Aorta (tissue), 5 donors: ENCODE measurements at regions of chr17 and their contacts with region 1.

Region 1: DNA sequence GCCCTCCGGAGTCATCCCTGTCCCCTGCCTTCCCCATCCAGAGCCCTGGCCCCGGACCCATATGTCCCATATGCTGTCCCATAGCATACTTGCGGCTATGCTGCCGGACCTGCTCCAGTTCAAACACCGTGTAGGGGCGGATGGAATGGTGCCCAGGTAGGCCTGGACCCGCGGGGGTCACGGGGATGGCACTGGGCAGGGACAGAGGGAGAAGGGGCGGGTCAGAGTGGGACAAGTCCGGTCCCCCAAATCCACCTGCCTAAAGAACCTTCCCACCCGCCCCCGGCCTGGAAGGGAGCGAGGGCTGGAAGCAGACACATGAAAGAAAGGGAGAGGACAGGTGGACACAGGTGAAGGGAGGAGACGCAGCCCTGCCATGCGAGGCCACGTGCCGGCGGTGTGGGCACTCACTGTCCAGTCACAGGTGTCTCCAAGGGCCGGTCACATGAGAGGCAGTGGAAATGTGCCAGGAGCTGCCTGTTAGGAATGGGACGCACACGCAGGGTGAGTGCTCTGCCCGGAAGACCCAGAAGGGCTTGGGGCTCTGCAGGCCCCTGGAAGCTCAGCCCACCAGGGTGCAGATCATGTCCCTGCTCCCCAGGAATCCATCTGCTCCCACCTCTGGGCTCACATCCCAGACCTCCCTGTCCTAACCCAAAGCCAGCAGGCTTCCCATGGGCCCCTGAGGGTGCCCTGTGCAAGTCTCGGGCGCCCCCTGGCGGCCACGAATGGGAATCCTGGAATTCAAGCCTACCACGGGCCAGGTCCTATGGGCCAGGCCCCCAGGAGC is 14.0 kb downstream of the UBALD2 start:
- DNase-seq: peak; percentile 90 to 96
- ATAC-seq: peak; percentile 87
- H3K4me3 ChIP-seq: no peak overlapping the region
- H3K27ac ChIP-seq: no peak overlapping the region
- H3K4me1 ChIP-seq: no peaks in the 10 kb centered on the region
- H3K27me3 ChIP-seq: no peaks in the 10 kb centered on the region

Region 2: DNA sequence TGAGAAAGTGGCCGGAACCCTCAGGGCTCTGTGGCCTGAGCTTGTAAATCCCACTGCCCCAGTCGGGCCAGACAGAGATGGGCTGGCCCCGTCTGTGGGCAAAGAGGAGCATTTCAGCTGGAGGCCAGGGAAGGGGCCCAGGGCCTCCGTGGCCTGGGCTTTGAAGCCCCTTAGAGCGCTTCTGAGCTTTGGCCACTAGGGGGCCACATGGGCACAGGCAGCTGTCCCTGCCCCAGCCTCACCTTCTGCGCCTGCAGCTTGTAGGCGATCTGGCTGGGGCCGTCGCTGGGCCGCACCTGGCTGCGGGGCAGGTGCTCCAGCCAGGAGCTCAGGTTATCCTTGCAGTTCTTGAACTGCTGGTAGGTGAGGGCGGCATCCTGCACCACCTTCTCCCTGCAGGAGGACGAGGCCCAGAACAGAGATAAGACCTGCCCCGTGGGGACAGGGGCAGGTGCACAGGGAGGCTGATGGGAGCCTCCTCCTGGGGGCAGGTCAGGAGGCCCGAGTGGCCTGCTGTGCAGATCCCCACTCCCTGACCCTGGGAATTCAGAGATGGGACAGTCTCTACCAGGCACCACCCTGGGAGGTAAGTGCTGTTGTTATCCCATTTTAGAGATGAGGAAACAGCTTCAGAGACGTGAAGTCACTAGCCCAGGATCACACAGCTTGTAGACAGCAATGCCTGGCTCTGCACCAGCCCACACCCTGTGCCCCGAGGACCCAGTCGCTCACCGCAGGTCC is 264.8 kb before region 1 on chr17:
- intact Hi-C with region 1: loop called in 1 of 2 experiments (anchors 5 kb)
- DNase-seq: peak; percentile 78 to 88
- ATAC-seq: peak; percentile 75
- H3K4me3 ChIP-seq: no peak overlapping the region
- H3K27ac ChIP-seq: no peak overlapping the region
- H3K4me1 ChIP-seq: no peaks in the 10 kb centered on the region
- H3K27me3 ChIP-seq: no peaks in the 10 kb centered on the region

Region 3: GRCh38 chr17:76191896-76192295 is 87.3 kb before region 1 on chr17:
- intact Hi-C with region 1: loop called in 1 of 2 experiments (anchors 5 kb)
- DNase-seq: no peak
- ATAC-seq: no peak
- H3K4me3 ChIP-seq: no peak overlapping the region
- H3K27ac ChIP-seq: no peak overlapping the region
- H3K4me1 ChIP-seq: no peaks in the 10 kb centered on the region
- H3K27me3 ChIP-seq: no peaks in the 10 kb centered on the region

Region 4: DNA sequence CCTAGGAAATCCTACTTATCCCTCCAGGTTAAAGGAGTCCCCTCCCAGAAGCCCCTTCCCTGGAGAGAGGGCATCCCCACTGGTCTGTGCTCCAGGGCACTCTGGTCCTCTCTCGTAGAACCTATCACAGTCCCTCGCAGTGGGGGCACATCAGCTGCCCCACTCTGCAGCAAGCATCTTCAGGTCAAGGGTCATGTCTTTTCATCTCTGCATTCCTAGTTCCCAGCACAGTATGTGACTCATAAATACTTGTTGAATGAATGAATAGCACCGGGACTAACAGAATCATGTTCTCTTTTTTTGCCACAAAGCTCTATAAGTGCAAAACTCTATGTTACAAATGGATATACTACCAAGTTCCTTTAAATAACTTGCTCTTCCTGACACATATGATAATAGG is 74.9 kb before region 1 on chr17:
- intact Hi-C with region 1: no loop called
- DNase-seq: no peak
- ATAC-seq: no peak
- H3K4me3 ChIP-seq: no peak overlapping the region
- H3K27ac ChIP-seq: no peak overlapping the region
- H3K4me1 ChIP-seq: no peaks in the 10 kb centered on the region
- H3K27me3 ChIP-seq: no peaks in the 10 kb centered on the region

Region 5: GRCh38 chr17:76240461-76241203 is 38.5 kb before region 1 on chr17 and contains the start of gene RNF157:
- intact Hi-C with region 1: loop called in 1 of 2 experiments (anchors 5 kb)
- DNase-seq: peak; percentile 68 to 85
- ATAC-seq: peak; percentile 77
- H3K4me3 ChIP-seq: peak within 1 kb of the TSS; percentile 46 to 84
- H3K27ac ChIP-seq: no peak within 1 kb of the TSS
- H3K4me1 ChIP-seq: no peaks in the 10 kb centered on the region
- H3K27me3 ChIP-seq: no peaks in the 10 kb centered on the region
- total RNA-seq, gene RNF157: 1.7 to 2.0 TPM